CD14-positive monocyte (primary cell): ENCODE measurements at regions of chr1 and their contacts with region 1.

Region 1: GRCh38 chr1:31771891-31772668 is 7.9 kb upstream of the ADGRB2 start:
- DNase-seq: no peak
- H3K4me3 ChIP-seq: no peak overlapping the region
- H3K4me3 Mint-ChIP-seq: peak overlapping the region; percentile 51 to 89
- H3K27ac ChIP-seq: no peak overlapping the region
- H3K27ac Mint-ChIP-seq: peak overlapping the region in 1 of 7 donors; percentile 50
- H3K4me1 ChIP-seq: no peaks in the 10 kb centered on the region
- H3K4me1 Mint-ChIP-seq: peaks cover 17% of the 10 kb centered on the region
- H3K27me3 ChIP-seq: peaks cover 38 to 79% of the 10 kb centered on the region in 2 donors
- H3K27me3 Mint-ChIP-seq: peaks cover 75 to 92% (median 85%) of the 10 kb centered on the region in 3 donors
- CTCF ChIP-seq: no peak

Region 2: DNA sequence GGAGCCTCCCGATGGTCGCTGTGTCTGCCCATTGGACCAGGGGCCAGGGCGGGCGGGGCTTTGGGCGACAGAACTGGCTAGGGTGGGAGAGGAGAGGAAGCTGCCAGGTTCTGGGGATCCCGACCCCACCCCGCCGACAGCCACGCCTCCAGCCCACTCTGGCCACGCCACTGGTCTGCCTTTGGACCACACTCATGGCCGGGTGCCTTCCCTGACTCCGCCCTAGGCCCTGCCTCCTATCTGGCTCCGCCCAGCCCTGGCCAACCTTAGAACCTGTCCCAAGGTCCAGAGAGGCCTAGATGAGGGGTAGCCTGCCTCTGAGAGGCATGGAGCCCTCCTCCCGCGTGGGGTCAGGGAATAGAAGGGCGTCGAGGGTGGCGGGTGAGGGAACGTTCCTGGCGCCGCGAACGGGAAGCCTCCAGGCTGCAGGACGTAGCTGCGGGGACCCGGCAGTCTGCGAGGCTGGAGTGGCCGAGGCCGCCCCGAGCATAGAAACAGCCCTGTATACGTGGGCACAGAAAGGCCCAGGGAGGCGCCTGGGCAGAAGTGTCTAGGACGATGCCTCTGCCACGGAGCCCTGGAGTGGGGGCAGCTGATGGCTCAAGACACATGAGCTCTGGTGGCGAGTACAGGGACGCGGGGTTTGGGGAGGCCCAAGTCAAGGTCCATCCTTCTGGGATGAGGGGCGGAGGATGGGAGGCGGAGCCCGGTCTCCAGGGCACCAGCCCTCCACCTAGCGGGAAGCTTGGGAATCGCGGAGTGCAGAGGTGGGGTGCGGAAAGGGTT is 56.8 kb before region 1 on chr1:
- intact Hi-C with region 1: loop called in 1 of 2 experiments (anchors 2 kb)
- DNase-seq: peak in 2 of 3 donors; percentile 3 to 9
- H3K4me3 ChIP-seq: peak overlapping the region in 2 of 3 experiments; percentile 14 to 50
- H3K4me3 Mint-ChIP-seq: peak overlapping the region; percentile 71 to 86
- H3K27ac ChIP-seq: no peak overlapping the region
- H3K27ac Mint-ChIP-seq: peak overlapping the region in 1 of 7 donors; percentile 60
- H3K4me1 ChIP-seq: peaks cover 15 to 20% of the 10 kb centered on the region in 2 donors
- H3K4me1 Mint-ChIP-seq: peaks cover 14% of the 10 kb centered on the region
- H3K27me3 ChIP-seq: peaks cover 3 to 49% of the 10 kb centered on the region in 2 donors
- H3K27me3 Mint-ChIP-seq: peaks cover 48 to 60% (median 58%) of the 10 kb centered on the region in 3 donors
- CTCF ChIP-seq: peak; percentile 51

Region 3: DNA sequence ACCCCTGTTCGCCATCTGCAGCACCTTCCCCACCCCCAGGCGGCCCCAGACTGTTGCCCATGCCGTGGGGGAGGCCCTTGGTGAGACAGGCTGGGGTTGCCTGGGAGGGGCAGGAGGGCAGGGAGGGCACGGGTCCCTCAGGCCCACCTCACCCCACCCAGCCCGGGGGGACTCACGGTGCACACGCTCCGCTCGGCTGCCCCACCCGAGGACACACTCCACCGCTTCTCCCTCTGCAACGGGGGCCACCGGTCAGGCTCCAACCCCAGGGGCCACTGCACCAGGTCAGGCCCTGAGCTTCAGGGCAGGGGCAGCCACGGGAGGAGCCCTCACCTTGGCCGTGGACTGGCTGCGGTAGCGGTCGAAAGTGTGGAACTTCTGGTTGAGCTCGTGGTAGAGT is 44.2 kb before region 1 on chr1:
- intact Hi-C with region 1: no loop called
- DNase-seq: no peak
- H3K4me3 ChIP-seq: no peak overlapping the region
- H3K4me3 Mint-ChIP-seq: no peak overlapping the region
- H3K27ac ChIP-seq: no peak overlapping the region
- H3K27ac Mint-ChIP-seq: no peak overlapping the region
- H3K4me1 ChIP-seq: no peaks in the 10 kb centered on the region
- H3K4me1 Mint-ChIP-seq: no peaks in the 10 kb centered on the region
- H3K27me3 ChIP-seq: no peaks in the 10 kb centered on the region
- H3K27me3 Mint-ChIP-seq: peaks cover 0 to 4% (median 4%) of the 10 kb centered on the region in 3 donors
- CTCF ChIP-seq: no peak

Region 4: DNA sequence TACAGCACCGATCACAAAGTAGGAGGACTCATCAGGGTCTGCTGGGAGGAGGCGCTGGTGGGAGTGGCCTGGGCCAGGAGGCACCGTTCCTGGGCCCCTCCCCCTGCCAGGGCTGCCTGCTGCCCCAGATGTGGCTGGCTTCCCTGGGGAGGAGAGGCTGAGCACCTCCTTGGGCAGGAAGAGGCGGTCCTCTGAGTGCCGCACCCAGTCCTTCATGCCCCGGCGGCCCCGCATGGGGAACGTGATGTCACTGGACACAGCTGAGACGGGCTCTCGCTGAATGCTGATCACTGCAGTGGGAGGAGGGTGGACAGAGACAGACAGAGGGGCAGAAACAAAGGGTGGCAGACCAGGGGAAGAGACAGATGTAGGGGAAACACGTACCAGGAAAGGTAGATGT is 32.7 kb before region 1 on chr1:
- intact Hi-C with region 1: no loop called
- DNase-seq: no peak
- H3K4me3 ChIP-seq: no peak overlapping the region
- H3K4me3 Mint-ChIP-seq: no peak overlapping the region
- H3K27ac ChIP-seq: no peak overlapping the region
- H3K27ac Mint-ChIP-seq: no peak overlapping the region
- H3K4me1 ChIP-seq: no peaks in the 10 kb centered on the region
- H3K4me1 Mint-ChIP-seq: peaks cover 2% of the 10 kb centered on the region
- H3K27me3 ChIP-seq: no peaks in the 10 kb centered on the region
- H3K27me3 Mint-ChIP-seq: peaks cover 2 to 11% (median 8%) of the 10 kb centered on the region in 3 donors
- CTCF ChIP-seq: no peak